ENCODE measurements at regions of chr20 and their contacts with region 1.

Region 1: GRCh38 chr20:20261159-20261558 is 106.7 kb upstream of the INSM1 start:
- DNase-seq: no peak
- H3K4me3 ChIP-seq: no peak overlapping the region
- H3K27me3 ChIP-seq: no peaks in the 10 kb centered on the region
- CTCF ChIP-seq: no peak

Region 2: DNA sequence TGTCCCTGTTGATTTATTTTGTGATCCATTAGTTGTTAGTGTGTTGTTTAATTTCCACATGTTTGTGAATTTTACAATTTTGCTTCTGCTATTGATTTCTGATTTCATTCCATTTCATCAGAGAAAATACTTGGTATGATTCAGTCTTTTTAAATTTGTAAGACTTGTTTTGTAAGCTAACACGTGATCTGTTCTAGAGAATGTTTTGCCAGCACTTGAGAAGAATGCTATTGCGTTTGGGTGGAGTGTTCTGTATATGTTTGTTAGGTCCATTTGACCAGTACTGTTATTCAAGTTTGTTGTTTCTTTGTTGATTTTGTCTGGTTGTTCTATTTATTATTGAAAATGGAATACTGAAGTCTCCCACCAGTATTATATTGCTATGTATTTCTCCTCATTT is 918.6 kb after region 1 on chr20:
- CTCF ChIA-PET with region 1: no interaction called
- POLR2A ChIA-PET with region 1: interaction called, 11 read pairs
- DNase-seq: no peak
- H3K4me3 ChIP-seq: no peak overlapping the region
- H3K27me3 ChIP-seq: no peaks in the 10 kb centered on the region
- CTCF ChIP-seq: no peak

Measured in BJ (cell line).